IMR-90 (cell line): ENCODE measurements at regions of chr11 and their contacts with region 1.

Region 1: DNA sequence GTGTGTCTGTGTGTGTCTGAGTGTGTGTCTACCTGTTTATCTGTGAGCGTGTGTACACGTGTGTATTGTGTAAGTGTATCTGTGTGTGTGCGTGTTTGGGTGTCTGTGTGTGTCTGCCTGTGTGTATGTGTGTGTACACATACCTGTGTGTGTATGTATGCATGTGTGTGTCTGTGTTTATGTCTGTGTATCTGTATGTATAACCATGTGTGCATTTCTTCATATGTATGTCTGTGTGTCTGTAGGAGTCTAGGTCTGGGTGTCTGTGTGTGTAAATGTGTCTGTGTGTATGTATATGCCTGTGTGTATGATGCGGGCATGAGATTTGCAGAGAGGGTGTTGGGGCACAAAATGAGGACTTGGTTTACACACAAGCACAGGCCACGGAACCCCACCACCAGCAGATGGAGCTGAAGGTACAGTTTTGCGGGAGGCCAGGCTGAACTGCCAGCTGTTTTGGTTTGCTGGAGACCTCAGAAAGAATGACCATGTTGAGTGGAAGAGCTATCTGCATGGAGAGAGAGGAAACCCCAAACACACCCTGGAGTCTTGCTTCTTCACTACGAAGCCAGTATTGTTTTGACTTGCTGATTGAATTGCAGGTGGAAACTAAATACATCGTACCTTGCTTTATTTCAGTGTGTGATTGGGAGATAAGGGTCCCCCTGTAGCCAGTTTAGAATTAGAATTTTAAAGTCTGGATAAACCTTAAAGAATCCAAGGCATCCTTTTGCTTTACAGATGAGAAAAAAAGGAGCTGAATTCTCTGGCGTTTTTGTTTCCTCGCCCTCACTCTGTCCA is 497.2 kb downstream of the NTM start:
- DNase-seq: peak; percentile 89
- ATAC-seq: peak; percentile 98
- H3K4me3 ChIP-seq: no peak overlapping the region
- H3K27ac ChIP-seq: no peak overlapping the region
- H3K4me1 ChIP-seq: no peaks in the 10 kb centered on the region
- H3K27me3 ChIP-seq: no peaks in the 10 kb centered on the region
- CTCF ChIP-seq: peak; percentile 97
- POLR2A ChIP-seq: peak; percentile 65
- RAD21 ChIP-seq: peak; percentile 100

Region 2: GRCh38 chr11:131694526-131695424 is 172.9 kb before region 1 on chr11:
- CTCF ChIA-PET with region 1: interaction called, 5 read pairs
- POLR2A ChIA-PET with region 1: no interaction called
- dilution Hi-C with region 1: no loop called
- in situ Hi-C with region 1: no loop called
- intact Hi-C with region 1: loop called (anchors 2 kb)
- DNase-seq: peak; percentile 69
- ATAC-seq: peak; percentile 99
- H3K4me3 ChIP-seq: no peak overlapping the region
- H3K27ac ChIP-seq: no peak overlapping the region
- H3K4me1 ChIP-seq: 0 out of 2 replicates have a peak, but pooled peaks cover 2% of the 10 kb centered on the region
- H3K27me3 ChIP-seq: no peaks in the 10 kb centered on the region; the same call in 1 of the 2 replicates
- CTCF ChIP-seq: peak; percentile 99
- POLR2A ChIP-seq: no peak
- RAD21 ChIP-seq: peak; percentile 92

Region 3: DNA sequence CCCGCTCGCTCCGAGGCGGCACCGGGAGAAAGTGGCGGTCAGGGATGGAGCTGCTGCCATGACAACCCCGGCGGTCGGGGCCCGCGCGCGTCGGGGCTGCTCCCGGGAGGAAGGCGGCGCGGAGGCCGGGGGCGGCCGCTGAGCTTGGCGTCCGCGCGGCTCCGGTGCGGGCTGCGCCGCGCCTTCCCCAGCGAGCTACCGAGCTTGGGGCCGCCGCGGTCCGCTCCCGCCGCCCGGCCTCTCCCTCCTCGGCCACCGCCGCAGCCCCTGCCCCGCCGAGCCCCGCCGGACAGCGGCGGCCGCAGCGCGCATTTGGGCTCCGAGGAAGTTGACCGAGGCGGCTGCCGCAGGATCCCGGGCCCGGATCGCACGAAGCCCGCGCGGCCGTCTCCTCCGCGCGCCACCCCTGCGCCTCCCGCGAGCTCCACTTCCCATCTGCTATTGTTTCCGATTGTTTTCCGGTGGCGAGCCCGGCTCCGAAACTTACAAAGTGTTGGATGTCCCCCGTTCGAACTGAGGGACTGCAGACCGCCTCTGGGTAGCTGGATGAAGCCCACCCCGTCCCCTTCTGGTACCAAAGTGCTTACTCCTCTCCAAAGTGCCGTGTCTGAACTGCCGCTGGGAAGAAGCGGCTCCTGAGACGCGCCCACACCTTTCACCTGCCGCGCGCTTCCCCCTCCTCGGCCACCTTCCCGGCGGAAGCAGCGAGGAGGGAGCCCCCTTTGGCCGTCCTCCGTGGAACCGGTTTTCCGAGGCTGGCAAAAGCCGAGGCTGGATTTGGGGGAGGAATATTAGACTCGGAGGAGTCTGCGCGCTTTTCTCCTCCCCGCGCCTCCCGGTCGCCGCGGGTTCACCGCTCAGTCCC is 43.1 kb after region 1 on chr11:
- CTCF ChIA-PET with region 1: interaction called, 9 read pairs
- POLR2A ChIA-PET with region 1: no interaction called
- dilution Hi-C with region 1: no loop called
- in situ Hi-C with region 1: no loop called
- intact Hi-C with region 1: loop called (anchors 1 kb)
- DNase-seq: peak; percentile 43
- ATAC-seq: peak; percentile 60
- H3K4me3 ChIP-seq: peak overlapping the region; percentile 72
- H3K27ac ChIP-seq: peak overlapping the region; percentile 26
- H3K4me1 ChIP-seq: peaks cover 5% of the 10 kb centered on the region
- H3K27me3 ChIP-seq: no peaks in the 10 kb centered on the region
- CTCF ChIP-seq: no peak
- POLR2A ChIP-seq: no peak
- RAD21 ChIP-seq: no peak; the same call in 1 of the 2 replicates

Region 4: DNA sequence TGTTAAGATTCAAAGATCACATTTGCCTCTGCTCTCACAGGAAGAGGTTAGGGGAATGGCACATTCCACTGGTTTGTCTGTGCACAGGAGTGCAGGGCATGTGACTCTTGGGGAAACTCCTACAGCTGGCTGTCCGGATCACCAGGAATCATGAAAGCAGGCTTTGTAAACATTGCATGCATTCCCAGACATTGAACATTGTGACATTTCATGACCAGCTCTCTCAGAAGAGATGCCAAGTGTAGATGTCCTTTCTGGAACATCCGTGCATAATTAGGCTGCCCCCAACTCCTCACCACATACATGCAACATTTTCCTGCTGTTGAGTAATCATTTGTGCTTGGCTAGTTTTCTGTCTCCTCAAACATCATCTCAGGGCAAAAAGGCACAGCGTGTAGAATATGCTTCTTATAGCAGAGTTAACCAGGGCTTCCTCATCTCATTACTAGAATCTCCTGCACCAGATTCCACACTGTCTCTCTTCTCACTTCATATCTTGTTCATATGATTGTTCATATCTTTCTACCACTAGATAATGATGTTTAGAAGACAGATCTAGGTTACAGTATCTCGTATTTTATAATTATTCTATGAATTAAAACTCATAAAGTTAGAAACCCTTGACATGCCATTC is 197.4 kb after region 1 on chr11:
- CTCF ChIA-PET with region 1: no interaction called
- POLR2A ChIA-PET with region 1: no interaction called
- dilution Hi-C with region 1: no loop called
- in situ Hi-C with region 1: no loop called
- intact Hi-C with region 1: loop called (anchors 2 kb)
- DNase-seq: peak; percentile 99
- ATAC-seq: peak; percentile 80
- H3K4me3 ChIP-seq: no peak overlapping the region
- H3K27ac ChIP-seq: peak overlapping the region; percentile 27; the same call in 1 of the 2 replicates
- H3K4me1 ChIP-seq: peaks cover 26% of the 10 kb centered on the region
- H3K27me3 ChIP-seq: no peaks in the 10 kb centered on the region
- CTCF ChIP-seq: no peak
- POLR2A ChIP-seq: peak; percentile 68
- RAD21 ChIP-seq: peak; percentile 24; the same call in 1 of the 2 replicates

Region 5: DNA sequence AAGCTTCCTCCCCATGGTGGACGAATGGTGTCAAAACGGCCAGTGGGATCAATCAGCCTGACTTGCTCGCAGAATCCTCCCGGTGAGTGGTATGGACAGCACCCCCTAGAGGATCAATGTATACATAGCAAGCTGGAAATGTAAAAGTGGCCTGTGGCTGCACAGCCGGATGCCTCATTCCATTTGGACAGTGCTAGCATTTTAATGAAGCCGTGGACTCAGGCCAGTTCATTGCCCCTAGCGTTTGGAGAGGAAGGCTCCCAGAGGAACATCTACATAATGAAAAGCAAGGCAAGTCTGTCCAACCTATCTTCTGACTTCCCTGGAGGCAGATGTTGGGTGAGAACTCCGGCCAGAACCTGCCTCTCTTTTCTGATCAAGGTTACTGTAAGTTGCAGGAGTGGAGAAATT is 445.0 kb after region 1 on chr11:
- CTCF ChIA-PET with region 1: interaction called, 6 read pairs
- POLR2A ChIA-PET with region 1: no interaction called
- dilution Hi-C with region 1: no loop called
- in situ Hi-C with region 1: loop called (anchors 10 kb)
- intact Hi-C with region 1: loop called (anchors 2 kb)
- DNase-seq: peak; percentile 46
- ATAC-seq: peak; percentile 93
- H3K4me3 ChIP-seq: no peak overlapping the region
- H3K27ac ChIP-seq: no peak overlapping the region
- H3K4me1 ChIP-seq: peaks cover 5% of the 10 kb centered on the region
- H3K27me3 ChIP-seq: no peaks in the 10 kb centered on the region
- CTCF ChIP-seq: peak; percentile 56
- POLR2A ChIP-seq: no peak
- RAD21 ChIP-seq: no peak

Region 6: GRCh38 chr11:132941024-132941646 is 1073.5 kb after region 1 on chr11:
- CTCF ChIA-PET with region 1: no interaction called
- POLR2A ChIA-PET with region 1: no interaction called
- dilution Hi-C with region 1: no loop called
- in situ Hi-C with region 1: no loop called
- intact Hi-C with region 1: loop called (anchors 1 kb)
- DNase-seq: peak; percentile 43
- ATAC-seq: peak; percentile 45; the same call in 1 of the 2 replicates
- H3K4me3 ChIP-seq: no peak overlapping the region
- H3K27ac ChIP-seq: no peak overlapping the region
- H3K4me1 ChIP-seq: peaks cover 2% of the 10 kb centered on the region; the same call in 1 of the 2 replicates
- H3K27me3 ChIP-seq: peaks cover 26% of the 10 kb centered on the region
- CTCF ChIP-seq: peak; percentile 81
- POLR2A ChIP-seq: no peak
- RAD21 ChIP-seq: peak; percentile 78